Activated naive CD4-positive, alpha-beta T cell treated with anti-CD3 and anti-CD28 coated beads, Interleukin-2, amount 10 ng/mL, durations not matched to agents 7 days and 5 days (primary cell): ENCODE measurements at regions of chr3 and their contacts with region 1.

Region 1: GRCh38 chr3:172530566-172530965 is 7.3 kb upstream of the TNFSF10 start:
- DNase-seq: peak; percentile 38
- H3K4me3 Mint-ChIP-seq: no peak overlapping the region
- H3K27ac Mint-ChIP-seq: peak overlapping the region; percentile 81
- H3K4me1 Mint-ChIP-seq: peaks cover 52% of the 10 kb centered on the region
- H3K27me3 Mint-ChIP-seq: no peaks in the 10 kb centered on the region

Region 2: GRCh38 chr3:172357850-172358754 is 172.5 kb before region 1 on chr3:
- CTCF ChIA-PET with region 1: no interaction called
- DNase-seq: no peak
- H3K4me3 Mint-ChIP-seq: no peak overlapping the region
- H3K27ac Mint-ChIP-seq: no peak overlapping the region
- H3K4me1 Mint-ChIP-seq: no peaks in the 10 kb centered on the region
- H3K27me3 Mint-ChIP-seq: no peaks in the 10 kb centered on the region

Region 3: DNA sequence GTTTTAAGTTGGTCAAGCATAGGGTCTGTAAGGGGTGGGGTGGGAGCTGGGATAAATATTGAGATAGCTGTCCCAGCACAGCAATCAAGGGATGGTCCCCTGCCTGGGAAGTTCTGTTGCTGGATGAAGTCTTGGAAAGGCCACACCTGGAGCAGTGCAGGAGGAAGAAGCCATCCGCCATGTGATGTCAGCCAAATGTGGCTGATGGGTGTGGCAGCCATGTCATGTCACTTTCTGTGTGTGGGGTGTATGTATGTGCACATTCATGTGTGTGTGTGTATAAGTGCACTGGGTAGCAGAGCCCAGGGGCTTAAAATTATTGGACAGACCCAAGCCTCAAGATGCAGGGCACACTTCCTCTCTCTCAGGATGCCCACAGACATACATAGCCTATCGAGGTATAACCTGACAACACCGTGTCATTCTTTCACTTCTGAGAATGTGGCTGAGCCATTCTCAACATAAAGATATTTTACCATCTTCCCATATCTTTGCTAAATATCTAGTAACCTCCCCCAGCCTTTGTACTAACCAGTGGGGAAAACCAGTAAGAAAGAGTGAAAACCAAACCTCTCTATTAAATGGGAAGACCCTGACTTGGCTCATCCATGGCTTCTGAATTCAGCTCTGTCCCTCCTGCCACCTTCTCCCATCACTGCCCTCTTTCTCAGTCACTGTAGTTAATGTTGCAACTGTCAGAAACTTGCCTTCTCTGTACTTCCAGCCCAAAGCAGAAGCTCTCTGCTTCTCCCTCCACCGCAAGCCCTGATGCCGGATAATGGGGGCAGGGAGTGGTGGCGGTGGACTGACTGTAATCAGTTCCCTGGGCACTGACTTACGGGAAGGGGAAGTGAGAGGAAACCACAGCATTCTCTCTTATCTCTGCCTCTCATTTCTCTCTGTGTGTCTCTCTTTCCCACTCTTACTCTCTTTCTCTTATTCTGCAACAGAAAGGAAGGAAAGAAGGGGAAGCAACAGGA is 18.5 kb before region 1 on chr3:
- CTCF ChIA-PET with region 1: interaction called, 24 read pairs
- DNase-seq: peak; percentile 75
- H3K4me3 Mint-ChIP-seq: peak overlapping the region; percentile 45
- H3K27ac Mint-ChIP-seq: peak overlapping the region; percentile 89
- H3K4me1 Mint-ChIP-seq: peaks cover 88% of the 10 kb centered on the region
- H3K27me3 Mint-ChIP-seq: no peaks in the 10 kb centered on the region

Region 4: GRCh38 chr3:172550347-172550943 is 19.9 kb after region 1 on chr3:
- CTCF ChIA-PET with region 1: interaction called, 18 read pairs
- DNase-seq: peak; percentile 61
- H3K4me3 Mint-ChIP-seq: no peak overlapping the region
- H3K27ac Mint-ChIP-seq: no peak overlapping the region
- H3K4me1 Mint-ChIP-seq: peaks cover 32% of the 10 kb centered on the region
- H3K27me3 Mint-ChIP-seq: peaks cover 5% of the 10 kb centered on the region